ENCODE measurements at regions of chr3 and their contacts with region 1.

Region 1: GRCh38 chr3:134357261-134358184 is 16.7 kb downstream of the AMOTL2 start:
- DNase-seq: no peak
- H3K4me3 ChIP-seq: no peak overlapping the region
- H3K27ac ChIP-seq: no peak overlapping the region
- H3K4me1 ChIP-seq: no peaks in the 10 kb centered on the region
- H3K27me3 ChIP-seq: no peaks in the 10 kb centered on the region

Region 2: DNA sequence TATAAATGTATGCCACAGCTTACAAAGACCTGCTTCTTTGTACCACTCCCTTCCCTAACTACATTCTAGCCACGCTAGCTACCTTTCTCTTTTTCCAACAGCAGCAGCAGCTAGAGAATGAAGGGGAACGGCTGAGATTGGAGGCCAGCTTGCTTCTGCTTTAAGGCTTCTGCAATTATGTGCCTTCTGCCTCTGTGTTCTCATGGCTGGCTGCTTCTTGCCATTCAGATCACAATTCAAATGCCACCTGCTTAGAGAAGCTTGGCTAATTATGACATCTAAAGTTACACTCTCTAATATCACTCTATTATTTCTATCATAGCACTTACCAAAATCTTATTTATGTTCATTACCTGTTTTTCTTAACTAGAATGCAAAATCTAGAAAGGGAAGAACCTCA is 202.1 kb before region 1 on chr3:
- CTCF ChIA-PET with region 1: no interaction called
- POLR2A ChIA-PET with region 1: no interaction called
- DNase-seq: no peak
- H3K4me3 ChIP-seq: no peak overlapping the region
- H3K27ac ChIP-seq: no peak overlapping the region
- H3K4me1 ChIP-seq: no peaks in the 10 kb centered on the region
- H3K27me3 ChIP-seq: no peaks in the 10 kb centered on the region

Region 3: GRCh38 chr3:134232151-134232550 is 125.4 kb before region 1 on chr3:
- CTCF ChIA-PET with region 1: no interaction called
- POLR2A ChIA-PET with region 1: no interaction called
- DNase-seq: no peak
- H3K4me3 ChIP-seq: no peak overlapping the region
- H3K27ac ChIP-seq: no peak overlapping the region
- H3K4me1 ChIP-seq: peaks cover 0 to 8% (median 7%) of the 10 kb centered on the region in 4 experiments
- H3K27me3 ChIP-seq: no peaks in the 10 kb centered on the region

Region 4: DNA sequence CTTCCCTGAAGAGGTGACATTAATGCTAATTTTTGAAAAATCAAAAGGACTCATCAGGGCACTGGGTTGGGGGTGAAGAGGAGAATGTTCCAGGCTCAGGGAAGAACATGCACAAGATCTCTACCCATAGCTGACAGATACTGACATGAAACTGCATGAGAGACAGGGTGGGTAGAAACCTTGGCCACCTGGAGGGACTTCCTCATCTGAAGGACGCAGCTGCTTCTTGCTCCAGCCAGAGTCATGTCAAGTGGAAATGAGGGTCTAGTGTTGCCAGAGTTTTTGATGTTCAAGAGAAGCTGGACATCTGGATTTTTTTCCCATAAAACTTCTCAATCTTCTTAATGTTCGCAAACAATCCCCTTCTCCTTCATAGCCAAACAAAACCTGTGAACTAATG is 13.0 kb before region 1 on chr3:
- CTCF ChIA-PET with region 1: interaction called, 12 read pairs
- POLR2A ChIA-PET with region 1: no interaction called
- DNase-seq: peak in 2 of 3 donors; percentile 68 to 81
- H3K4me3 ChIP-seq: no peak overlapping the region
- H3K27ac ChIP-seq: no peak overlapping the region
- H3K4me1 ChIP-seq: peaks cover 0 to 12% (median 9%) of the 10 kb centered on the region in 4 experiments
- H3K27me3 ChIP-seq: no peaks in the 10 kb centered on the region